A673 (cell line): ENCODE measurements at regions of chr1 and their contacts with region 1.

Region 1: DNA sequence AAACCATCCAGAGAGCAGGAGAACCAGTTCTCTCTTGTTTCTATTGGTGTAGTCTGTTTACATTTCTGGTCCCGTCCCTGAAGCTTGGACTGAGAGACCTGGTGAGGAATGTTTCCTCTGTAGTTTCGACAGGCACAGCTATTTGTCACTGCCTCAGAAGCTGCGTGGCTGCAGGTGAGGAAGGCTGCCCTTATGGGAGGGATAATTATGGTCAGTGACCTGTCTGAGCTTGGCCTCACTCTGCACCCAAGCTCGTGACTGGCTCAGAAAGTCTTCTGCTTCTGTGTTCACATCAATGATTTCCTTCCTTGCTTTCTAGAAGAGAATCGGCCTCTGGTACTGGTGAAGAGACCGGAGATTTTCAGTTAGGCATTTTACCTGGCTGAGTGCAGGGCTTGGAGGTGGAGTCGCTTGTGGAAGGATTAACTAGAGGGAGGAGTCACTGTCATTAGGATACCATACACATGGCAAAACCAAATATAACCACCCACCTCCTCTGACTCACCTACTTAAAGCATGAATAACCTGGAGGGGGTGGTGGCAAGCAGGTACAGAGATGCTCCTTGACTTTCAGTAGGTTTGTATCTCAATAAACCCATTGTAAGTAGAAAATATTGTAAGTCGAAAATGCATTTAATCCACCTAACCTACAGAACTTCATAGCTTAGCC is 19.9 kb upstream of the WDR26 start:
- DNase-seq: no peak
- H3K4me3 ChIP-seq: no peak overlapping the region
- H3K27ac ChIP-seq: no peak overlapping the region
- H3K4me1 ChIP-seq: peaks cover 8% of the 10 kb centered on the region
- H3K27me3 ChIP-seq: no peaks in the 10 kb centered on the region
- CTCF ChIP-seq: no peak

Region 2: DNA sequence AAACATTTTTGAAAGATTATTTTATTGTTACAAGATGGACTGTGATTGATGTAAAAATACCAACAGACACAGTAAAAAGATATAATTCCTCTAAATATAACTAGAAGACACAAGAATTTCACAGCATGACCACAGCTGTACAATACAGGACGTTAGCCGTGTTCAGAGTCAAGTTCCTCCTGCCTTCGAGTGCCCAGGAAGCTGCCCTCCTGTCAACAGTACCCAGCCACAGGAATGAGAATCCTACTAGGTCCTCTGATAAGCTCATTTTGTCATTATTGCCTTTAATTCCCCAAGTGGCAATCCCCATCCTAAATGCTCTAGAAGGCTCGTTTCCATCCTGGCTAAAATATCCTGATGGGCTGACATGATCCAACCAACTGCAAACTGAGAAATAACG is 758.6 kb before region 1 on chr1:
- CTCF ChIA-PET with region 1: no interaction called
- POLR2A ChIA-PET with region 1: no interaction called
- intact Hi-C with region 1: loop called (anchors 5 kb)
- DNase-seq: no peak
- H3K4me3 ChIP-seq: no peak overlapping the region
- H3K27ac ChIP-seq: no peak overlapping the region
- H3K4me1 ChIP-seq: peaks cover 4% of the 10 kb centered on the region
- H3K27me3 ChIP-seq: no peaks in the 10 kb centered on the region
- CTCF ChIP-seq: no peak

Region 3: DNA sequence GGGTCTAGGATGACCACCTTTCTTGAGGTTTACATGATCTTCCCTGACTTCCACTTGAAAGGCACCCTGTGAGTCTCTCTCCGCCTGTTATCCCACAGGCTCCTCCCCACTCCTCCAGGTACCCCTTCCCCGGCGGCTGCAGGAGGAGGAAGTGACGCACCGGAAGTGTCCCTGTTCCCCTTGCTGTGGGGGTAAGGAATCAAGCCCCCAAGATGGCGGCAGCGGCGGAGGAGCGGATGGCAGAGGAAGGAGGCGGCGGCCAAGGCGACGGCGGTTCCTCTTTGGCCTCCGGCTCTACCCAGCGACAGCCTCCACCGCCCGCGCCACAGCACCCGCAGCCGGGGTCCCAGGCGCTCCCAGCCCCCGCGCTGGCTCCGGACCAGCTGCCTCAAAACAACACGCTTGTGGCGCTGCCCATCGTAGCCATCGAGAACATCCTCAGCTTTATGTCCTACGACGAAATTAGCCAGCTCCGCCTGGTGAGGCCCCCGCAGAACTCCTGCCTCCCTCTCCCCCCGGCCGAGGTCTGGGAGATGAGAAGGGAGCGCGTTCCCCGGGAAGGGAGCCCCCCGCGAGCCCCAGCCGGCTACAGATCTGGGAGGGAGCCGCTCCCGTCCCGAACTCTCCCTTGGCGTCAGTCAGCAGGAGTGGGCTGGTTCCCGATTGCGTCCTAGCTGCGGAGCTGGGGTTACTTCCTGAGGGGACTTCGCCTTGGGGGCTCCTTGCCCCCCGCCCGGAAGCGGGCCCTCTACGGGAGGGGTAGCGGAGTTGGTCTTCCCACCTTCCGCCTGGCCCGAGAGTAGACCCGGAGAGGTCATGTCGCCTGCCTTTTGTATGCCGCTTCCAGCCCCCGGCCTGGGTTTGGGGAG is 340.4 kb before region 1 on chr1 and contains the start of gene FBXO28:
- CTCF ChIA-PET with region 1: interaction called, 7 read pairs
- POLR2A ChIA-PET with region 1: no interaction called
- intact Hi-C with region 1: loop called (anchors 10 kb)
- DNase-seq: peak; percentile 98
- H3K4me3 ChIP-seq: peak within 1 kb of the TSS; percentile 90
- H3K27ac ChIP-seq: peak within 1 kb of the TSS; percentile 93
- H3K4me1 ChIP-seq: peaks cover 16% of the 10 kb centered on the region
- H3K27me3 ChIP-seq: no peaks in the 10 kb centered on the region
- CTCF ChIP-seq: no peak
- total RNA-seq, gene FBXO28: 39.0 and 45.8 TPM in 2 replicates

Region 4: GRCh38 chr1:224430511-224431113 is 23.9 kb before region 1 on chr1:
- CTCF ChIA-PET with region 1: interaction called, 13 read pairs
- POLR2A ChIA-PET with region 1: no interaction called
- intact Hi-C with region 1: no loop called
- DNase-seq: peak; percentile 64
- H3K4me3 ChIP-seq: peak overlapping the region; percentile 10
- H3K27ac ChIP-seq: peak overlapping the region; percentile 63
- H3K4me1 ChIP-seq: peaks cover 33% of the 10 kb centered on the region
- H3K27me3 ChIP-seq: no peaks in the 10 kb centered on the region
- CTCF ChIP-seq: no peak

Region 5: DNA sequence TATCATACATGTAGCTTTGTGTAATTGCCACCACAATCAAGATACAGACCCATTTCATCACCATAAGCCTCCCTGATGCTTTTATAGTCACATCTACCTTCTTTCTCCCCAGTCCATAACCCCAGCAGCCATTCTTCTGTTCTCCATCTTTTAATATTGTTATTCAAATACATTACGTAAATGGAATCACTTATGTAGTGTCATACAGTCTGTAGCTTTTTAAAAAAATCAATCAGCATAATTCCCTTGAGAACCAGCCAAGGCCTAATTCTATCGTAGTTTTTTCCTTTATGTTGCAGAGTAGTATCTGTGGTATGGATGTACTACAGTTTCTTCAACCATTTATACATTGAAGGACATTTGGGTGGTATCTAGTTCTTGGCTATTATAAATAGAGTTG is 11.6 kb after region 1 on chr1:
- CTCF ChIA-PET with region 1: no interaction called
- POLR2A ChIA-PET with region 1: no interaction called
- intact Hi-C with region 1: no loop called
- DNase-seq: no peak
- H3K4me3 ChIP-seq: no peak overlapping the region
- H3K27ac ChIP-seq: no peak overlapping the region
- H3K4me1 ChIP-seq: no peaks in the 10 kb centered on the region
- H3K27me3 ChIP-seq: no peaks in the 10 kb centered on the region
- CTCF ChIP-seq: no peak

Region 6: GRCh38 chr1:224783129-224783651 is 328.7 kb after region 1 on chr1:
- CTCF ChIA-PET with region 1: no interaction called
- POLR2A ChIA-PET with region 1: no interaction called
- intact Hi-C with region 1: no loop called
- DNase-seq: no peak
- H3K4me3 ChIP-seq: no peak overlapping the region
- H3K27ac ChIP-seq: no peak overlapping the region
- H3K4me1 ChIP-seq: no peaks in the 10 kb centered on the region
- H3K27me3 ChIP-seq: peaks cover 5% of the 10 kb centered on the region
- CTCF ChIP-seq: no peak

Region 7: GRCh38 chr1:224884361-224884801 is 429.8 kb after region 1 on chr1:
- CTCF ChIA-PET with region 1: interaction called, 10 read pairs
- POLR2A ChIA-PET with region 1: no interaction called
- intact Hi-C with region 1: no loop called
- DNase-seq: peak; percentile 31
- H3K4me3 ChIP-seq: no peak overlapping the region
- H3K27ac ChIP-seq: no peak overlapping the region
- H3K4me1 ChIP-seq: peaks cover 7% of the 10 kb centered on the region
- H3K27me3 ChIP-seq: no peaks in the 10 kb centered on the region
- CTCF ChIP-seq: no peak